Vagina (tissue), 2 donors: ENCODE measurements at regions of chr6 and their contacts with region 1.

Region 1: DNA sequence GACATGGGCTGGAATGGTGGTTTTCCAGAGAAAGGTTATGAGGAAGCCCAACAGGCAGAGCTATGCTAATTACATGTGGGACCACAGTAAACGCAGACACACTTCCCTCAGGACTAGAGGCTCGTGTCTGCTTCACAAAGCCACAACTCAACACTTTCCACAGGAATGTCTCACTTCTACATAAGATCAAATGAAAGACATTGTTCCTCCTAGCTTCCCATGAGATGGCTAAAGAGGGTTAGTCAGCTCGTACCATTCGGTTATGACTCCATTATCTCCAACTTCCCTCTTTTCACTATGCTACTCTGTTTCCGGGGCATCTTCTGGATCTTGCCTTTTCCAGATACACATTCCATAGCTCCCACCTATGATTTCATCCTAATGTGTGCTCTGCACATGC is 29.1 kb upstream of the ZC3H12D start:
- DNase-seq: no peak
- H3K4me3 ChIP-seq: no peak overlapping the region
- H3K27ac ChIP-seq: no peak overlapping the region
- H3K4me1 ChIP-seq: no peaks in the 10 kb centered on the region
- H3K27me3 ChIP-seq: no peaks in the 10 kb centered on the region
- CTCF ChIP-seq: no peak
- POLR2A ChIP-seq: no peak

Region 2: GRCh38 chr6:149032599-149033405 is 481.1 kb before region 1 on chr6:
- intact Hi-C with region 1: loop called (anchors 10 kb)
- DNase-seq: no peak
- H3K4me3 ChIP-seq: no peak overlapping the region
- H3K27ac ChIP-seq: peak overlapping the region; percentile 82
- H3K4me1 ChIP-seq: peaks cover 46% of the 10 kb centered on the region
- H3K27me3 ChIP-seq: no peaks in the 10 kb centered on the region
- CTCF ChIP-seq: no peak
- POLR2A ChIP-seq: no peak

Region 3: GRCh38 chr6:149082286-149082707 is 431.6 kb before region 1 on chr6:
- intact Hi-C with region 1: loop called (anchors 5 kb)
- DNase-seq: no peak
- H3K4me3 ChIP-seq: no peak overlapping the region
- H3K27ac ChIP-seq: peak overlapping the region; percentile 18
- H3K4me1 ChIP-seq: peaks cover 34% of the 10 kb centered on the region
- H3K27me3 ChIP-seq: no peaks in the 10 kb centered on the region
- CTCF ChIP-seq: peak; percentile 35 to 80 (median 67)
- POLR2A ChIP-seq: no peak

Region 4: GRCh38 chr6:149316798-149317655 is 196.9 kb before region 1 on chr6:
- intact Hi-C with region 1: loop called (anchors 10 kb)
- DNase-seq: peak in 1 of 2 donors; percentile 87
- H3K4me3 ChIP-seq: peak overlapping the region; percentile 56 to 98
- H3K27ac ChIP-seq: peak overlapping the region; percentile 91
- H3K4me1 ChIP-seq: peaks cover 31% of the 10 kb centered on the region
- H3K27me3 ChIP-seq: no peaks in the 10 kb centered on the region
- CTCF ChIP-seq: no peak
- POLR2A ChIP-seq: peak in 1 of 2 donors; percentile 50

Region 5: DNA sequence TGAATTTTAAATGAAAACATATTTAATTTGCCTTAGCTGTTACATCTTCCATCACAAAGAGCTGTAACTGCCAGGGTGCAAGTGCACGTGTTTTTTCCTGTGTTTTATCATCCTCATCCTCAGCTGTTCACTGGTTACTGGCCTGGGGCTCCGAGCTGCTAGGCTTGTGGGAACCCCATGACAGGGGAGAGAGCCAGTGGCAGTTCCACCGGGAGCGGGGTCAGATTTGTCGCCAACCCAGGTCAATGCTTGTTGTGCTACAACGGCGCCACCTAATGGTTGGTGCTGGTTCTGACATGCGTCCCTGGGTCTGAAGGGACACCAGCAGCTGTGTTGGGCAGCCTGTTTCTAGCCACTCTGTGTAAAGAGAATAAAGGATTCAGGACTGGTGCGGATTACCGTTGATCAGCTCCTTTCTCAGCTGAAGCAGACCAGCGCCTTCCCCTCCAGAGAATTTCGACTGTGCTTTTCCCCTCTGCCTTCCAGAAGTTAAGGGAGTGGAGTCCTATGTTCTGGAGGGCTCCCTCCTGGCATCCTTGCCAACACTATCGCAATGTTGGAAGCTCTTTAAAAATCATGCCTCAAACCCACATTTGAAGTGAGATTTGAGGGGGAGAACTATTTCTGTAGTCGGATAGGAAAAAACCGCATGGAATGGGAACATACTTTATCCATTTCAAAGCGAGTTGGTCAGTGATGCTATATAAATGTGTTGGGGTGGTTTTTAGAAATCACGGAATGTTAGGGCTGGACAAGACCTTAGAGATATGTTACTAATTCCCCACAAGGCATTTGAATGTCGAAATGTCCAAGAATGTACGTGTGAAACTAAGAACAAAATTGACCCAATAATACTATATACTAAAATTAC is 81.8 kb before region 1 on chr6:
- intact Hi-C with region 1: loop called (anchors 10 kb)
- DNase-seq: no peak
- H3K4me3 ChIP-seq: no peak overlapping the region
- H3K27ac ChIP-seq: no peak overlapping the region
- H3K4me1 ChIP-seq: peaks cover 6% of the 10 kb centered on the region
- H3K27me3 ChIP-seq: no peaks in the 10 kb centered on the region
- CTCF ChIP-seq: peak; percentile 90 to 96 (median 93)
- POLR2A ChIP-seq: no peak

Region 6: DNA sequence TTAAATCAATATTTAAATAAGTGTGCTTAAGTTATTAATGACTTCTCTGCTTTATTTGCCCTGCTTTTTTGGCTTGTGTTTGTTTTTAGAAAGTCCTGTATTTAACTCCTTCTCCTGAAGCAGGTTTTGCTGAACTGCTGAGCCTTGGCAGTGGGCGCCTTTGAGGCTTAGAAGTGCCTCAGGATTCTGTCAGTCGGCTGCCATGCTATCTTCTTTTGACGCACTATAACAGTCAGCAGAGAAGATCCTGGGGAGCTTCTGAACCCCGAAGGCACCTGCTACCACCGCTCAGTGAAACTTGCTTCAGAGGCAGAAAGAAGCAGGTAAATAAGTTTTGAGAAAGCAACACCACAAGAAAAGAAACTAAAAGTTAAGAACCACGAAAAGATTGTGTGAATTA is 258.0 kb after region 1 on chr6:
- intact Hi-C with region 1: no loop called
- DNase-seq: no peak
- H3K4me3 ChIP-seq: no peak overlapping the region
- H3K27ac ChIP-seq: no peak overlapping the region
- H3K4me1 ChIP-seq: no peaks in the 10 kb centered on the region
- H3K27me3 ChIP-seq: no peaks in the 10 kb centered on the region
- CTCF ChIP-seq: no peak
- POLR2A ChIP-seq: no peak